Activated CD4-positive, alpha-beta T cell treated with anti-CD3 and anti-CD28 coated beads, Interleukin-2, amount 10 ng/mL, durations not matched to agents 24 days and 14 days (primary cell): ENCODE measurements at regions of chr2 and their contacts with region 1.

Region 1: DNA sequence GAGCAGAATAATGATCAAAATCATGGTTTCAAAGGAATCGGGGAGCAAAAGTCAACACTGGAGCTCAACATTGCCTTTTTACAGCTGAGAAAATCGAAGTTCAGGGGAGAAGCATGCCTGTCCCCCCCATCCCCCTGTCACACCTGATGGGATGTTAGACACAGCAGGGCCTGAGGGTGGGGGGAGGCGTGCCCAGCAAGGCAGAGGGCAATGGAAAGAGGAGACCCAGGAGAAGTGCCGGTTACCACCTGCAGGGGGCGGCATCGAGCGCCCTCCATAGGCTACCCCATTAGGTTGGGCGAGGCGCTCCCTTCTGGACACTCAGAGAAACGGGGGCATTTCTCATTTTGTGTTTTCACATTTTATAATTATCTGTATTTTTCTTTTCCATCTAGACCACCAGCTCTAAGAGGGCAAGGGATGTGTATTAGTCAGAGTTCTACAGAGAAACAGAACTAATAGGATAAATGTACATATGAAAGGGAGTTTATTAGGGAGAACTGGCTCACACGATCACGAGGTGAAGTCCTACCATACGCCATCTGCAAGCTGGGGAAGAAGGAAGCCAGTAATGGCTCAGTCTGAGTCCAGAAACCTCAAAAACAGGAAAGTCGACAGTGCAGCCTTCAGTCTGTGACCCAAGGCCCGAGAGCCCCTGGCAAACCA is 271.3 kb downstream of the LRATD1 start:
- DNase-seq: peak; percentile 88
- H3K4me3 Mint-ChIP-seq: no peak overlapping the region
- H3K27ac Mint-ChIP-seq: no peak overlapping the region
- H3K4me1 Mint-ChIP-seq: no peaks in the 10 kb centered on the region
- H3K27me3 Mint-ChIP-seq: no peaks in the 10 kb centered on the region

Region 2: GRCh38 chr2:15159751-15160177 is 255.9 kb after region 1 on chr2:
- intact Hi-C with region 1: loop called (anchors 5 kb)
- DNase-seq: peak; percentile 69
- H3K4me3 Mint-ChIP-seq: no peak overlapping the region
- H3K27ac Mint-ChIP-seq: no peak overlapping the region
- H3K4me1 Mint-ChIP-seq: peaks cover 3% of the 10 kb centered on the region
- H3K27me3 Mint-ChIP-seq: peaks cover 7% of the 10 kb centered on the region

Region 3: DNA sequence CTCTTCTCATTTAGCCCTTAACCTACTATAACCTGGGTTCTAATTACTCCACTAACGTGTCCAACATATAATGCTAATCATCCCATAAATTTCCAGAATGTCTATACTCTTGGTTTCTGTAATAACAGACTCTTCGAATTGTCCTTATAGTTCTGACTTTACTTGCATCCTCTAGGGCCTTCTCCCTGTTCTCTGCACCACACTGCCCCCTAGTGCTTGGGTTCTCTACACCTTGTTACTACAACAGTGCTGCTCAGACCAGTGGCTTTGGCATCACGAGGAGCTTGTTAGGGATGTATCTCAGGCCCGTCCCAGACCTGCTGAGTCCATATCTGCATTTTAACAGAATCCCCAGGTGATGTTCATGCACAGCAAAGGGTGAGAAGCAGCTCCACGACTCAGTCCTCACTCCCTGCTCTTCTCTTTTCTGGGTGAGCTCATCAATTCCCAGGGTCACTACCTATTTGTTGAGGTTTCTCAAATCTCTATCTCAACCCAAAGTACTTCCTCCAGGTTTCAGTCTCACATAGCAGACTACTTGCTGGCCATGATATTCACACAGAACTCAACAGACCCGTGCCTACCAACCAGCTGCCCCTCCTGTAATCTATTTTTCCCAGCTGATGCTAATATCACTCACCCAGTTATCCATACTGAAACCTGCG is 673.4 kb after region 1 on chr2:
- intact Hi-C with region 1: loop called (anchors 1 kb)
- DNase-seq: peak; percentile 96
- H3K4me3 Mint-ChIP-seq: no peak overlapping the region
- H3K27ac Mint-ChIP-seq: no peak overlapping the region
- H3K4me1 Mint-ChIP-seq: no peaks in the 10 kb centered on the region
- H3K27me3 Mint-ChIP-seq: no peaks in the 10 kb centered on the region